ENCODE measurements at regions of chr5 and their contacts with region 1.

Region 1: DNA sequence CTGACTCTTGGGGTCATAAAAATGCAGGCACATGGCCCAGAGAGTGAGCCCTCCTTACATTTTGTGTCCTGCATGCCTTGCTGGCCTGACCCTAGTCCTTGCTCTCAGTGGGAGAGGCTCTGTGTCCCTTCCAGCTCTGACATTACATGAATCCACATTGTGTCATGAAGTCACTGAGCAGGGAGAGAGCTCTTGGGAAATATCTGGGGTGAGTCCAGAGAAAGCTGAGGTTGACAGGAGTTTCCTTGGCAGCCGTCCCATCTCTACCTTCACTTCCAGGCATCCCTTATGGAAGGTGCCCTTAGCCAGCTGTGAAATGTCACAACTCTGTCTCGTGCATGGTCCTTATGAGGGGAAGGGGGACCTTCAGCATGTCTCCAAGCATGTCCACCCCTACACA is 41.0 kb downstream of the FAT2 start:
- DNase-seq: no peak
- ATAC-seq: no peak
- H3K4me3 Mint-ChIP-seq: no peak overlapping the region
- H3K27ac Mint-ChIP-seq: no peak overlapping the region
- H3K4me1 Mint-ChIP-seq: no peaks in the 10 kb centered on the region
- H3K27me3 Mint-ChIP-seq: peaks cover 3% of the 10 kb centered on the region

Region 2: GRCh38 chr5:151388960-151389359 is 161.2 kb before region 1 on chr5:
- CTCF ChIA-PET with region 1: no interaction called
- POLR2A ChIA-PET with region 1: no interaction called
- DNase-seq: no peak
- ATAC-seq: no peak
- H3K4me3 Mint-ChIP-seq: no peak overlapping the region
- H3K27ac Mint-ChIP-seq: no peak overlapping the region
- H3K4me1 Mint-ChIP-seq: no peaks in the 10 kb centered on the region
- H3K27me3 Mint-ChIP-seq: peaks cover 29% of the 10 kb centered on the region

Region 3: DNA sequence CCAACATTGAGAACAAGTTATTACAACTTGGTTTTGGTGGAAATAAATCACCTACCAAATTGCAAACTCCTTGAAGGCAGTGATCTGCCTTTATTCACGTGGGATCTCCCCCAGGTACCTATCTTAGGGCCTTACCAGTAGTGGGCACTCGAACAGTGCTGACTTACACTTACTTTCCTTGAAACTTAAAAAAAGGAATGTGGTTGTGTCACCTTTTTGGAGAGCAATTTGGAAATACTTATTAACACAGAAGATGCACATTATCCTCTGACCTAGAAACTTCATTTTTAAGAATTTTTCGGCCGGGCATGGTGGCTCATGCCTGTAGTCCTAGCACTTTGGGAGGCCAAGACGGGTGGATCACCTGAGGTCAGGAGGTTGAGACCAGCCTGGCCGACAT is 14.3 kb after region 1 on chr5:
- CTCF ChIA-PET with region 1: no interaction called
- POLR2A ChIA-PET with region 1: interaction called, 10 read pairs
- DNase-seq: no peak
- ATAC-seq: no peak
- H3K4me3 Mint-ChIP-seq: no peak overlapping the region
- H3K27ac Mint-ChIP-seq: no peak overlapping the region
- H3K4me1 Mint-ChIP-seq: no peaks in the 10 kb centered on the region
- H3K27me3 Mint-ChIP-seq: peaks cover 2% of the 10 kb centered on the region

Region 4: DNA sequence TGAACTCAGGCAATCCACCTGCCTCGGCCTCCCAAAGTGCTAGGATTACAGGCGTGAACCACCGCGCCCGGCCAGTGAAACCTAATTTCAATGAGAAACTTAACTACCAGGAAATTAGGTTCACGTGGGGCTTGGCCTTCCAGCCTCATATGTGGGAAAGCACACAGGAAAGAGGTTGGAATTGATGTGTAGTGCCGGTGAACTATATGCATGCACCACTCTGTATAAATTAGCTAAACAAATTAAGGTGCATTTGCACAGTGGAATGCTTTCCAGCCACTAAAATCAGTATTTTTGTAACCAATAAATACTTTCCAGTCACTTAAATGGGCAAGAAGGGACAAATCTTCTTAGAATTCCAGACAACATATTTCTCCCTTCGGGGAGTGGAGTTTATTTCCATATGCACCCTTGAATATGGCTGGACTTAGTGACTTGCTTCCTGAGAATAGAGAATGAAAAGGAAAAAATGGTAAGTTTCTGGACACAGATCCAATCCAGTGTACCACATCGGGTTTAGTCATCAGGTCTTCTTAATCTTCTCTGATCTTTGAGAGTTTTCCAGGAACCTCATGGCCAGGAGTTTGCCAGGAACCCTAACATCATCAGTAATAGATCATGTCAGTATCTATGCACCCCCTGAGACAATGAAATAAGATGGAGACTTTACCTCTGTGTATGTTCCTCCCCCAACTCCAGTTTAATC is 183.4 kb after region 1 on chr5:
- CTCF ChIA-PET with region 1: no interaction called
- POLR2A ChIA-PET with region 1: no interaction called
- DNase-seq: no peak
- ATAC-seq: no peak
- H3K4me3 Mint-ChIP-seq: no peak overlapping the region
- H3K27ac Mint-ChIP-seq: no peak overlapping the region
- H3K4me1 Mint-ChIP-seq: no peaks in the 10 kb centered on the region
- H3K27me3 Mint-ChIP-seq: no peaks in the 10 kb centered on the region